ENCODE measurements at regions of chr19 and their contacts with region 1.

Region 1: GRCh38 chr19:21482863-21483276 is 22.5 kb upstream of the ZNF429 start:
- DNase-seq: peak; percentile 71 to 87 (median 84)
- ATAC-seq: peak; percentile 93
- H3K4me3 ChIP-seq: no peak overlapping the region
- H3K27ac ChIP-seq: no peak overlapping the region
- H3K4me1 ChIP-seq: no peaks in the 10 kb centered on the region
- H3K27me3 ChIP-seq: no peaks in the 10 kb centered on the region

Region 2: GRCh38 chr19:21202865-21203494 is 279.9 kb before region 1 on chr19:
- intact Hi-C with region 1: loop called in 2 of 4 experiments (anchors 5 to 10 kb)
- DNase-seq: no peak
- ATAC-seq: peak in 1 of 2 donors; percentile 61
- H3K4me3 ChIP-seq: no peak overlapping the region
- H3K27ac ChIP-seq: no peak overlapping the region
- H3K4me1 ChIP-seq: no peaks in the 10 kb centered on the region
- H3K27me3 ChIP-seq: no peaks in the 10 kb centered on the region

Region 3: GRCh38 chr19:21698215-21698614 is 215.3 kb after region 1 on chr19:
- intact Hi-C with region 1: loop called in 2 of 4 experiments (anchors 5 to 10 kb)
- DNase-seq: no peak
- ATAC-seq: peak in 1 of 2 donors; percentile 33
- H3K4me3 ChIP-seq: no peak overlapping the region
- H3K27ac ChIP-seq: no peak overlapping the region
- H3K4me1 ChIP-seq: no peaks in the 10 kb centered on the region
- H3K27me3 ChIP-seq: no peaks in the 10 kb centered on the region